ENCODE measurements at regions of chr11 and their contacts with region 1.

Region 1: DNA sequence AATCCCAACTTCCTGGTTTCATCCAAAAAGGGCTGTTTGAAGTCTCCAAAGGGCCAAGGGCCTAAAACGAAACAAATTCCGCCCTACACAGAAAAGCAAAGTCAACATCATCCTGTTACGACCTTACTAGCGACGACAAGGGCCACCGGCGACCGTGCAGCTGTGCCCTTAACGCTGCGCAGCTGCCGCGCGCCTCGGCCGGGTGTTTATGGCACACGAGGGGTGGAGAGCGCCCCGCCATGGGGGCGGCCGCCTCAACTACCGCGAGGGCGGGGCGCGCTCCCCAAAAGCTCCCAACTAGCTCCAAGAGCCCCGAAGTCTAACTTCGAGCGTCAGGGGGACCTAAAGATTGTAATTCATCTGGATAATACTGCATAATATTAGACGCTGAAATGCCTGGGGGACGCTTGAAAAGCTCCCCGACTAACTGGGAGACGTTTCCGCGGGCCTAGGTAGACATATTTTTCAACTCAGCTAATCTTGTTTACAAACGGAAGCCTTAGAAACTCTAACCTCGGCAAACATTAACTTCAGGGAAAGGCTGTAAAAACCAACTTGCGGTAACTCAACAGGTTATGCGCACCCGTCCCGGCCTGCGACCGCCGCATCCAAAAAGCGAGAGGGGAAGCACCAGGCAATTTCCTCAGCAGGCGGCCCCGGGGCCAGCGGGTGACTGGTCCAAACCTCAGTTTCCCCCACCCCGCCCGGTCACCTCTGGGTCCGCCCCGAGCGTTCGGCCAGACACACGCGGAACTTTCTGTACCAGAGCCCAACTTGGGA is 694 bp downstream of the TMEM123 start:
- DNase-seq: peak; percentile 75
- H3K4me3 Mint-ChIP-seq: peak overlapping the region; percentile 93
- H3K27ac Mint-ChIP-seq: peak overlapping the region; percentile 94
- H3K4me1 Mint-ChIP-seq: peaks cover 86% of the 10 kb centered on the region
- H3K27me3 Mint-ChIP-seq: peaks cover 3% of the 10 kb centered on the region

Region 2: DNA sequence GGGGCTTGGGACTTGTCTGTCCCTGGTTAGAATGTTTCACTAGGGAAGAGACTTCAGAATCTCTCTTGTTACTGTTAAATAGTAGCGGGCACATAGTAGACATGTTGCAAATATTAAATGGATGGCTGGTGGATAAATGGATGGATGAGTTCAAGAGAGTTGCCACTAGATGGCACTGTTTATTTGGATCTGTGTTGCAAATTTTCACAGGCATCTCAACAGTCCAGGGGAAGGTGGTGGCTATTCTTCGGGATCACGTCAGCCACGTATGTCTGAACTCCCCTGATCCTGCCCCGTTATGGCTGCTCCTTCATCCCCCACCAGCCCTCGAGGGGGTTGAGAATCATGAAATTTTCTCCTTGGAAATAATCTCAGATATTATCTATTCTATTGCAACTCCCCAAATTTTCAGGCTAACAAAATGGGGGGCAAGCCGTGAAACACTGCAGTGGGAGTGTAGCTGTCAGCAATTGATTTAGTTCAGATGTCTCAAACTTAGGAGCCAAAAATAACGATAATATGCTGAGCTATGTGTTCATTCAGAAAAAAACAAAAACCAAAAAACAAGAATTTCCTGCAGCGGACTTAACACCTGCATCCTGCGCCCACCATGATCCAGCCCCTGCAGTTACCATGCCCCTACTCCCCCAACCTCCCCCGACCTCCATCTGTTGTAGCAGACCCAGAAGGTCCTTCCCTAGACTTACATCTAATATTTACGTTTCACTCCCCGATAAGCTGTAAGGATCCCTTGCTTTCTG is 163.7 kb before region 1 on chr11:
- intact Hi-C with region 1: loop called (anchors 2 kb)
- DNase-seq: peak; percentile 24
- H3K4me3 Mint-ChIP-seq: peak overlapping the region; percentile 8
- H3K27ac Mint-ChIP-seq: peak overlapping the region; percentile 35
- H3K4me1 Mint-ChIP-seq: peaks cover 39% of the 10 kb centered on the region
- H3K27me3 Mint-ChIP-seq: no peaks in the 10 kb centered on the region

Region 3: DNA sequence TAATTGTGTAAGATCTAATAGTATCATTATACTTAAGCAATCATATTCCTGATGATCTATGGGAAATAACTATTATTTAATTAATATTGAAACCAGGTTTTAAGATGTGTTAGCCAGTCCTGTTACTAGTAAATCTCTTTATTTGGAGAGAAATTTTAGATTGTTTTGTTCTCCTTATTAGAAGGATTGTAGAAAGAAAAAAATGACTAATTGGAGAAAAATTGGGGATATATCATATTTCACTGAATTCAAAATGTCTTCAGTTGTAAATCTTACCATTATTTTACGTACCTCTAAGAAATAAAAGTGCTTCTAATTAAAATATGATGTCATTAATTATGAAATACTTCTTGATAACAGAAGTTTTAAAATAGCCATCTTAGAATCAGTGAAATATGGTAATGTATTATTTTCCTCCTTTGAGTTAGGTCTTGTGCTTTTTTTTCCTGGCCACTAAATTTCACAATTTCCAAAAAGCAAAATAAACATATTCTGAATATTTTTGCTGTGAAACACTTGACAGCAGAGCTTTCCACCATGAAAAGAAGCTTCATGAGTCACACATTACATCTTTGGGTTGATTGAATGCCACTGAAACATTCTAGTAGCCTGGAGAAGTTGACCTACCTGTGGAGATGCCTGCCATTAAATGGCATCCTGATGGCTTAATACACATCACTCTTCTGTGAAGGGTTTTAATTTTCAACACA is 128.2 kb before region 1 on chr11:
- intact Hi-C with region 1: no loop called
- DNase-seq: no peak
- H3K4me3 Mint-ChIP-seq: peak overlapping the region; percentile 47
- H3K27ac Mint-ChIP-seq: no peak overlapping the region
- H3K4me1 Mint-ChIP-seq: peaks cover 56% of the 10 kb centered on the region
- H3K27me3 Mint-ChIP-seq: no peaks in the 10 kb centered on the region

Region 4: GRCh38 chr11:102390667-102391465 is 61.0 kb before region 1 on chr11:
- intact Hi-C with region 1: loop called (anchors 1 kb)
- DNase-seq: peak; percentile 36
- H3K4me3 Mint-ChIP-seq: no peak overlapping the region
- H3K27ac Mint-ChIP-seq: no peak overlapping the region
- H3K4me1 Mint-ChIP-seq: peaks cover 52% of the 10 kb centered on the region
- H3K27me3 Mint-ChIP-seq: no peaks in the 10 kb centered on the region

Region 5: DNA sequence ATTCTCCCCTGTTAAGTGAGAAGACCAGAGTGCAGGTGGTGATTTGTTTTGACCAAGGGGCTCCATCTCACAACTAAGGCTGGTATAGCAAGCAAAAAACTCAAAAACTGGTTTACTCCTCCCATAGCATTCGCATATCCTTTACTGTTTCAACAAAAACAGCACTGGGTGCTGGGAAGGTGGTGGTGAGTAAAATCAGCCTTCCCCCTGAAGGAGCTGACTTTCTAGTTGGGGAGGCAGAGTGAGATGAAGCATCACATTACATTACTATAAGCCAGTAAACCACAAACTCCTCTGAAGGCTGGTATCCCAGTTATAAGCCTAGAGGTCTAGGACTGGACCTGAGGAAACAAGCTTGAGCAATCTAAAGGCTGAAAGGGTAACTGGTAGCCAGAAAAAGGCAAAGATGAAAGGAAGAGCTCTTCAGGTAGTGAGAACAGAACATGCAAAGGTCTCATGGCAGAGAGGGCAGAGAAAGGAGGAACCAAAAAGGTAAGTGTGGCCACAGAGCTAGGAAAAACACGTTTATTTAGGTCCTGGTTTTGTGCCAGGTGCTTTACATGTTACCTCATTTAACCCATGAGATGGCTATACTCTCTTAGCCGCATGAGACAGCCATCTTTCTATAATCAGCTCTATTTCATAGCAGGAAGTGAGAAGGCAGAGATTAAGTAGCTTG is 21.6 kb before region 1 on chr11:
- intact Hi-C with region 1: loop called (anchors 2 kb)
- DNase-seq: no peak
- H3K4me3 Mint-ChIP-seq: peak overlapping the region; percentile 62
- H3K27ac Mint-ChIP-seq: peak overlapping the region; percentile 92
- H3K4me1 Mint-ChIP-seq: peaks cover 55% of the 10 kb centered on the region
- H3K27me3 Mint-ChIP-seq: no peaks in the 10 kb centered on the region

Region 6: DNA sequence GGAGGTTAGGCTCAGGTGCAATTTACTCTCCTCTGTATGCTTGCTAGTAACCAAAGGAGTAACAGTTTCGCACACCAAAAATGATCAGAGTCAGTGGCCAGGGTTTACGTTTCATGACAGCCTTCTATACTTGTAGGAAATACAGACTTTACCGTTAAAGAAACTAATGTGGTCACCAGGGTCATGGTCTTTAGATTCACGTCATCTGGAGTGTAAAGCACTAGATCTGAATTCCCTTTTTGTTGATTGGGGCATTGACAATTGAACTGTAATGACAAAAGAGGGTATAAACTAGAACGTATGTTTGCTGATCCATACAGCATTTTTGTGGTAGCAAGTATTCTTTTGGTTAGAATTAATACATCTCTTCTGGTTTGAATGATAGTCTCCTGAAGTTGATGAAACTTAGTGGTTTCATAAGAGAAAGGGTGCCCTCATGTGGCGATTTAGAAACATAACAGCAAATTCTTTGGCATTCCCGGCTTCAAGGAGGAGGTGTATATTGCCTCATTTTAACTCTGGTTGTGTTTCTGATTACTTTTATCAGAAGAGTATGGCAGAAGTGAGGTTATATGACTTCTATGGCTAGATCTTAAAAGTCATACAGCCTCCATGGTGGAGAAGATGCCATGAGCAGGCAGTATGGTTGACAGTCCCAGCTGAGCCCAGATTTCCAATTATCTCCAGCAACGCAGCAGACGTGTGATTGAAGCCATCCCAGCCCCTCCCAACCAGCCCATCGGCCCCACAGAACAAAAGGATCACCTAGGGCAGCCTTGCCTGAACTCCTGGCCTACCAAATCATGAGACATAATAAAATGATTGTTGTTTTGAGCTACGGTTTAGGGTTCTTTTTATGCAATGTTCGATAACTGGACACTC is 43.5 kb after region 1 on chr11:
- intact Hi-C with region 1: loop called (anchors 1 kb)
- DNase-seq: peak; percentile 18
- H3K4me3 Mint-ChIP-seq: no peak overlapping the region
- H3K27ac Mint-ChIP-seq: no peak overlapping the region
- H3K4me1 Mint-ChIP-seq: peaks cover 30% of the 10 kb centered on the region
- H3K27me3 Mint-ChIP-seq: peaks cover 2% of the 10 kb centered on the region

Region 7: GRCh38 chr11:102614485-102614884 is 162.6 kb after region 1 on chr11:
- intact Hi-C with region 1: loop called (anchors 5 kb)
- DNase-seq: no peak
- H3K4me3 Mint-ChIP-seq: no peak overlapping the region
- H3K27ac Mint-ChIP-seq: no peak overlapping the region
- H3K4me1 Mint-ChIP-seq: peaks cover 26% of the 10 kb centered on the region
- H3K27me3 Mint-ChIP-seq: peaks cover 4% of the 10 kb centered on the region

Measured in activated T-helper 1 cell treated with anti-CD3 and anti-CD28 coated beads, Interleukin-12 subunit alpha, Interleukin-12 subunit beta, Interleukin-2, Interleukin-4 antibody, amounts not matched to agents 30 ng/mL and 10 ng/mL and 1 ng/mL, durations not matched to agents 14 hours and 24 hours and 36 hours (primary cell).